Right ventricle myocardium inferior (tissue), 1 donor: ENCODE measurements at regions of chr7 and their contacts with region 1.

Region 1: DNA sequence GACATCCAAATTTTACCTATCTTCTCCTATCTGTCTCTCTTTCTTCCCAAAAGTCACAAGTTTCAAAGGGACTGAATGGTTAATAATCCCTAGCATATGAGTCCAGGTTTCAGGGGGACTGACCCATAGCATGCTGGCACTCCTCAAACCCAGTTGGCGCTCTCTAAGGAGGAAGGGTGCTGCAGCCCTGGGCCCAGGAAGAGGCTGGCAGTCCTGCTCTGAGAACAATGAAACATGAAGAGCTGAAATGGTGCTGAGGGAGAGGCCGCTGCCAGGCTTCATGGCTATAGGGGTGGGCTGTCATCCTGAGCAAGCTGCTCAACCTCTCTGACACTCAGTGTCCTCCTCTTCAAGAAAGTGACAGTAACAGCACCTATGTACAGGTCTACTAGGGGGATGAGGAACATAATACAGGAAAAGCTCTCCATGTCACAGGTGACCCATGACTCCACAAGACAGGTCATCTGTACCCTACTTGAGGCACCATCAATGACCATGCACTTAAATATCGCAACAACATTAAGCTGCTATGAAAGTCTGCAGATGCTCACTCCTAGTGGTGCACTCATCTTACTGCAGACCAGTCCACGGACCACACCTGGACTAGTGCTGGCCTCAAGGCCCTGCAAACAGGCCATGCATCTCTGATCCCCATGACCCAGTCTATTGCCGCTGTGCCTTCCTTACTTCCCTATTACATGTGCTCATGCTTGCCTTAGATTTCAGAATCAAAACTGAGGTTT is 17.0 kb downstream of the COBL start:
- DNase-seq: no peak
- ATAC-seq: no peak

Region 2: GRCh38 chr7:51123322-51124029 is 176.1 kb before region 1 on chr7:
- intact Hi-C with region 1: no loop called
- DNase-seq: no peak
- ATAC-seq: no peak

Region 3: DNA sequence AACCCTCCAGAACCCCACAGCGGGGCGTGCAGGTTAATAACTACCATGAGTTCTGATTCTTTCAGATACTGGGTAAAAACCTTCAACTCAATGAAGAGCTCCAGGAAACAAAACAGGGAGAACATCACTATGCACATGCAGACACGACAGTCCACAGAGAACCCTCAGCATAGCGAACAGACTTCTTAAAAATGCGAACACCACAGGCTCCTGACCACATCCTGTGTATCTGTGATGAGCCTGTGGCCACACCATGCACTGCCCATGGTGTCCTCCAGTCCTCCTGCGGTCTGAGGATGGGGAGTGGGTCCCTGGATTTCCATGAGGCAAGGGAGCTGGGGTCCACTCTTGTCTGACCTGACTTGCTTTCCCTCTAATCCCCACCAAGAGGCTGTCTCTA is 90.1 kb before region 1 on chr7:
- intact Hi-C with region 1: no loop called
- DNase-seq: no peak
- ATAC-seq: no peak

Region 4: GRCh38 chr7:51246258-51247245 is 53.0 kb before region 1 on chr7:
- intact Hi-C with region 1: loop called (anchors 5 kb)
- DNase-seq: no peak
- ATAC-seq: peak; percentile 96

Region 5: GRCh38 chr7:51328351-51328801 is 28.8 kb after region 1 on chr7:
- intact Hi-C with region 1: no loop called
- DNase-seq: no peak
- ATAC-seq: no peak